Uterus (tissue), 4 donors: ENCODE measurements at regions of chr6 and their contacts with region 1.

Region 1: DNA sequence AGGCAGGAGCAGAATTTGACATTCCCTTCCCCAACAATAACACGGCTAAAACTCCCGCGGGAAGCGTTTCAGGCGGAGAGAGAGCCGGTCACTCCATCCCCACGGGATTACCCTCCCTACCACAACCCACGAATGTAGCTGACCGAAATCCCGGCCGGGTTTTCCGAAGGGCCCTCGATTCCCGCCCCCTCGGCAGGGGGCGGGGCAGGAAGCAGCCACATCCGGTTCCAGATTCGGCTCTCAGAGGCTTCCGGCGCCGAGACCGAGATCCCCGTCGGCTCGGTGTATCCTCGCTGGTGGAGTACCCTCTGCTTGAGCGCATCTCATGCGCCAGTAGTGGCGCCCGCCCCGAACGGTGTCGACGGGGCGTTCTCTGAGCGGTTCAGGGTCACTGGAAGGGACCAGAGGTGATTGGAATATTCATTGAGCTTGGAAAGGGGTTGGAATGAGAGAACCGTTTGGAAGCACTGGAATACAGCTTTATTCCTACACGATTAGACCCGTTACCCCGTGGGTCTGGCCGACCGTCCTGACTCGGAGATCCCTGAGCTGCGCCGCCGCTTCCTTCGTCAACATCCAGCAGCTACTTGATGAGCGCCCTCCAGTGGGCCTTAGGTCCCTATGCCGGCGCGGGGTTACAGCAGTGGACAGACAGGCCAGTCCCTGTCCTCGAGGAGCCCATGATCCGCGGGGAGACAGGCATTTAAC is 649 bp upstream of the RGL2 start:
- DNase-seq: peak; percentile 90 to 93
- H3K4me3 ChIP-seq: peak overlapping the region; percentile 55 to 66
- H3K27ac ChIP-seq: peak overlapping the region; percentile 95
- H3K4me1 ChIP-seq: peaks cover 0 to 7% of the 10 kb centered on the region in 2 donors
- H3K27me3 ChIP-seq: no peaks in the 10 kb centered on the region
- CTCF ChIP-seq: peak; percentile 49 to 62 (median 61)
- POLR2A ChIP-seq: peak; percentile 25 to 65

Region 2: DNA sequence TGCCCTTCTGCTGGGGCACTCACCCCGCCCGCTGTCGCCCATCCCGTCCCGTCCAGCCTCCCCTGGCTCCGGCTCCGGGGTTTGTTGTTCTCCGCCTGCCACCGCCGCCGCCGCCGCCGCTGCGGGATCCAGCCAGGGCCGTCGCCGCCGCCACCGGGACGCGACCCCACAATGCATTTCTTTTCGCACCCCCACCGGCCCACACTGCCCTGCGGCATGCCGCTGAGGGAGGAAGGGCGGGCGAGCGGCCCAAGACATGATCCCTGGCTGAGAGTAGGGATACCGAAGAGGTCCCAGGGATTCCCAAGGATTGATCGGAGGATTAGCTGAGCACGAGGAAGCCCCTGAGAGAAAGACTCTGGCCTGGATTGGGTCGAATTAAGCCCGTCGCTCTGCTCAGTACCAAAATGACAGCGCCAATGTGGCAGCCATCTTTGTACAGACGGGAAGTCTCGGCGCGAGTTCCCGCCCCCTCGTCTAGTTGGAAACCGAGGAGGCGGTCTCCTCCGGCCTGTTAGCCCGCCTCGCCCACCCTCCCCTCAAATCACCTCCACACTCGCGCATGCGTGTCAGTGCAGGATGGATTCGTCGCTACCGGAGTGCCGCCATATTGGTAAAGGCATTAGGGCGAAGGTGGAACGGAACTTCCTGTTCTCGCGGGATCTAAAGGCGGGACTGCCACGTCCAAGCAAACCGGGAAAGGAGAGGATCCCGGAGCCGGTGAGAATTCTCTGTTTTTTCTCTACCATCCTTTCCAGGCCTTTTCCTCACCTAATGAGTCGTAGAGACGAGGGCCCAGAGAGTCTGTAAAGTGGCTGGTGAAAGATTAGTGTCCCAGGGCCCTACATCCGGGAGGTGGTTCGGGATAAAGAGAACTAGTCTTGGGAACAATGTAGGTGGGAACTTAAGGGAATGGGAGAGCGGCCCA is 98.9 kb before region 1 on chr6 and contains the starts of genes RXRB and SLC39A7:
- intact Hi-C with region 1: loop called (anchors 10 kb)
- DNase-seq: peak; percentile 99 to 100
- H3K4me3 ChIP-seq: peak within 1 kb of the TSS; percentile 72 to 89
- H3K27ac ChIP-seq: peak within 1 kb of the TSS; percentile 94 to 96
- H3K4me1 ChIP-seq: peaks cover 10% of the 10 kb centered on the region in 2 donors
- H3K27me3 ChIP-seq: no peaks in the 10 kb centered on the region
- CTCF ChIP-seq: peak in 1 of 4 experiments; percentile 20
- POLR2A ChIP-seq: peak; percentile 42 to 53
- total RNA-seq, gene RXRB: 28.6 to 71.0 (median 34.0) TPM
- total RNA-seq, gene SLC39A7: 53.8 to 87.8 (median 57.5) TPM

Region 3: GRCh38 chr6:33271458-33272274 is 27.7 kb before region 1 on chr6 and contains the starts of genes RPS18 and VPS52:
- intact Hi-C with region 1: no loop called
- DNase-seq: peak; percentile 91 to 98
- H3K4me3 ChIP-seq: peak within 1 kb of the TSS; percentile 54 to 72
- H3K27ac ChIP-seq: peak within 1 kb of the TSS; percentile 87 to 94
- H3K4me1 ChIP-seq: peaks cover 4 to 7% of the 10 kb centered on the region in 2 donors
- H3K27me3 ChIP-seq: no peaks in the 10 kb centered on the region
- CTCF ChIP-seq: peak in 1 of 4 experiments; percentile 7
- POLR2A ChIP-seq: peak; percentile 94 to 97
- total RNA-seq, gene RPS18: 2,386 to 5,510 (median 4,061) TPM
- total RNA-seq, gene VPS52: 12.8 to 58.4 (median 37.5) TPM

Region 4: GRCh38 chr6:33425668-33426577 is 126.5 kb after region 1 on chr6:
- intact Hi-C with region 1: loop called (anchors 10 kb)
- DNase-seq: peak; percentile 88 to 90
- H3K4me3 ChIP-seq: peak overlapping the region; percentile 67 to 71
- H3K27ac ChIP-seq: peak overlapping the region; percentile 95 to 99
- H3K4me1 ChIP-seq: peaks cover 14 to 18% of the 10 kb centered on the region in 2 donors
- H3K27me3 ChIP-seq: no peaks in the 10 kb centered on the region
- CTCF ChIP-seq: peak; percentile 45 to 75 (median 66)
- POLR2A ChIP-seq: peak in 1 of 2 donors; percentile 55